ENCODE measurements at regions of chr7 and their contacts with region 1.

Region 1: DNA sequence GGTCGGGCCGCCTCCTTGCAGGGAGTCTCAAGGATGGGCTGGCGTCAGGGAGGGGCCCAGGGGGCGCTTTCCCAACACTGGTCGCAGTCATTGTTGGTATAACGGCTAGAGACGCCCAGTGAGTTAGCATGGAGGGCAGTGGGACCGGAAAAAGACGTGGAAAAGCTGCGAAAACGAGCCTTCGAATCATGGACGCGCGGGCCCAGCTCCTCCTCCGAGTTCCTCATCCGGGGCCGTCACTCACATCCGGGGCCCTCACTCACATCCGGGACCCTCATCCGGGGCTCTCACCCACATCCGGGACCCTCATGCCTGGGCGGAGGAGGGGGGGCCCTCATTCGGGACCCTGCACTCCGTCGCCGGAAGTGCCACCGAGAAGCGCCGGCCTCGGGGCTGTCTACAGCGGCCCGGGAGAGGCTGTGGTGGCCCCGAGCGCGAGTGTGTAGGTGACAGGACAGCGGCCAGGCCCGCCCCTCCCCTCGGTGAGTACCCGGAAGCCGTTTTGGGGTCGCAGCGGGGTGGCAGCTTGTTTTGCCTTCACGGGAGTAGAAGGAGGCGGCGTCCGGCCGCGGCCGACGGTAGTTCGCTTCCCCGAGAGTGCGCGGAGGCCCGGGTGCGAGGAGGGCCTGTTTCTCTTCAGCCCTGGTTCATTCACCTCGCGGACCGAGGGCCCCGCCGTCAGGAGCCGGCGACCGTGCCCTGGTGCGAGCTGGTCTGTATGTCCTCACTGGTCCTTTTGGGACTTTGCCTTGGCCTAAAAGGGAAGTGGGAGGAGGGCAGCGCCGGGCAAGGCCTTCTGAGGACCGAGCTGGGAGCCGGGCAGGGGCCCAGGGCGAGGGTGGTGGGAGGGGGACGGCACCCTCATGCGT is at the start of gene ZNF655:
- DNase-seq: peak; percentile 85
- ATAC-seq: peak; percentile 71
- H3K4me3 ChIP-seq: peak within 1 kb of the TSS; percentile 83
- H3K27ac ChIP-seq: peak within 1 kb of the TSS; percentile 97
- H3K4me1 ChIP-seq: peaks cover 14% of the 10 kb centered on the region
- H3K27me3 ChIP-seq: no peaks in the 10 kb centered on the region
- CTCF ChIP-seq: no peak
- POLR2A ChIP-seq: peak; percentile 86
- RAD21 ChIP-seq: no peak
- total RNA-seq, gene ZNF655: 49.6 and 56.4 TPM in 2 replicates

Region 2: DNA sequence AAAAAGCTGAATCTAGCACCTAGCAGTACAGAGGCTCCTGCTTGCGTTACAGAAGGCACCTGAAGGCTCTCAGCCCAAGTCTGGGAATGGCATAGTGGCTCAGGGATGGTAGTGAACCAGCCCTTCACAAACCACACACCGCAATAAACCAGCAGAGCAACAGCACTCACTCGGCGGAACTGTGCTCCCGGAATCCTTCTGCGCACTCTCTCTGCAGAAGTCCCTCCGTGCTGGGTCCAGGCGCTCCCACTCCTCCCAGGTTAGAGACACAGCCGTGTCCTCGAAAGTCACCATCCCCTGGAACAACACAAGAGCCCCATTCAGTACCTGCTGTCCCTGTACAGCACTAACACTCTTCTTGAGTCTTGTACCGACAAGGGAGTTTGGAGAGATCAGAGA is 60.0 kb before region 1 on chr7:
- CTCF ChIA-PET with region 1: no interaction called
- POLR2A ChIA-PET with region 1: no interaction called
- dilution Hi-C with region 1: no loop called
- in situ Hi-C with region 1: no loop called
- intact Hi-C with region 1: no loop called
- DNase-seq: no peak
- ATAC-seq: no peak
- H3K4me3 ChIP-seq: peak overlapping the region; percentile 57
- H3K27ac ChIP-seq: 0 out of 2 replicates have a peak overlapping the region, but pooled peaks have one; percentile 5
- H3K4me1 ChIP-seq: peaks cover 3% of the 10 kb centered on the region
- H3K27me3 ChIP-seq: no peaks in the 10 kb centered on the region
- CTCF ChIP-seq: no peak
- POLR2A ChIP-seq: no peak
- RAD21 ChIP-seq: no peak

Region 3: GRCh38 chr7:99616359-99617191 is 58.0 kb after region 1 on chr7 and contains the start of gene ZSCAN25:
- CTCF ChIA-PET with region 1: interaction called, 3 read pairs
- POLR2A ChIA-PET with region 1: no interaction called
- dilution Hi-C with region 1: no loop called
- in situ Hi-C with region 1: loop called (anchors 5 kb)
- intact Hi-C with region 1: loop called (anchors 5 kb)
- DNase-seq: peak; percentile 92
- ATAC-seq: peak; percentile 96
- H3K4me3 ChIP-seq: peak within 1 kb of the TSS; percentile 63
- H3K27ac ChIP-seq: peak within 1 kb of the TSS; percentile 54
- H3K4me1 ChIP-seq: no peaks in the 10 kb centered on the region
- H3K27me3 ChIP-seq: no peaks in the 10 kb centered on the region
- CTCF ChIP-seq: peak; percentile 52
- POLR2A ChIP-seq: peak; percentile 72
- RAD21 ChIP-seq: peak; percentile 28
- total RNA-seq, gene ZSCAN25: 9.0 and 9.2 TPM in 2 replicates

Region 4: GRCh38 chr7:99918959-99919813 is 360.6 kb after region 1 on chr7 and contains the start of gene TRIM4:
- CTCF ChIA-PET with region 1: no interaction called
- POLR2A ChIA-PET with region 1: no interaction called
- dilution Hi-C with region 1: no loop called
- in situ Hi-C with region 1: no loop called
- intact Hi-C with region 1: loop called (anchors 5 kb)
- DNase-seq: peak; percentile 91
- ATAC-seq: peak; percentile 98
- H3K4me3 ChIP-seq: peak within 1 kb of the TSS; percentile 98
- H3K27ac ChIP-seq: peak within 1 kb of the TSS; percentile 95
- H3K4me1 ChIP-seq: peaks cover 6% of the 10 kb centered on the region
- H3K27me3 ChIP-seq: no peaks in the 10 kb centered on the region
- CTCF ChIP-seq: peak; percentile 29; the same call in 1 of the 2 replicates
- POLR2A ChIP-seq: peak; percentile 84
- RAD21 ChIP-seq: no peak
- total RNA-seq, gene TRIM4: 10.6 and 15.3 TPM in 2 replicates

Measured in IMR-90 (cell line).